GM18951 (cell line): ENCODE measurements at regions of chr10 and their contacts with region 1.

Region 1: DNA sequence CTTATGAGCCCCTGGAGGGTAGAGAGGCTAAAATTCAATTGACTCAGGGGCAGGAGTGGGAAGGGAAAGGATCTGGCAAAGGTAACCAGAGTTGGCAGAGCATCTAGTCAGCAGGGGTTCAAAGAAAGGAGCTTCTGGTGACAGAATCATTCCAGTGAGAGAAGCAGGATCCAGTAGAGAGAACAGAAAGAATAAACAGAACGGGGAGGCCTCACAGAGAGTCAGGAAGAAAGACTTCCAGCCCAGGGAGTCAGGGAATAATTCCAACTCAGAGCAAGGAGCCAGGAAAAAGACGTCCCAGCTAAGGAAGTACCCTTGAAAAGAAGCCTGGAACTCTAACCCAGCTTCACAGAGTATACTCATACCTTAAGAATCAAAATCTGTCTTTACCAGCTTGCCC is 66.6 kb upstream of the CPXM2 start:
- POLR2A ChIP-seq: no peak

Region 2: DNA sequence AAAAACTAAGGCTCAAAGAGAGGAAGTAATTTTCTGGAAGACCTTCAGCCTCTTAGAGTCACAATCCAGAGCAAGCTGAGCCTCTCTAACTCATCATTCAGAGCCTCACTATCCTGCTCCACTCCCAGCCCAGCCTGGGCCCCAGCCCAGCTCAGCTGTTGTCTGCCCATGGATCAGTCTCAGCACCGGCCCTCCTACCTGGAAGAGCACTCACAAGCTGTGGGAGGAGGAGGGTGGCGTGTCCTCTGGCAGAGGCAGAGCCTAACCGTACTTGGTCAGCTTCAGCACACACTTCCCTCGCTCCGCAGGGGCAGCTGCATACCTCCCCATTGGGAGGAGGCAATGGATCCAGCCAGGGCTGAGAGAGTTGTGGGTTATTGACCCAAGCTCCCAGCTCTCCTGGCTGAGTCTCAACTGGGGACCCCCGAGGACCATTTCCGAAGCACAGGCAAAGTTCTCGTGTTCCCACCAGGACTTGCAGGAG is 358.8 kb before region 1 on chr10:
- in situ Hi-C with region 1: loop called (anchors 10 kb)
- POLR2A ChIP-seq: no peak

Region 3: DNA sequence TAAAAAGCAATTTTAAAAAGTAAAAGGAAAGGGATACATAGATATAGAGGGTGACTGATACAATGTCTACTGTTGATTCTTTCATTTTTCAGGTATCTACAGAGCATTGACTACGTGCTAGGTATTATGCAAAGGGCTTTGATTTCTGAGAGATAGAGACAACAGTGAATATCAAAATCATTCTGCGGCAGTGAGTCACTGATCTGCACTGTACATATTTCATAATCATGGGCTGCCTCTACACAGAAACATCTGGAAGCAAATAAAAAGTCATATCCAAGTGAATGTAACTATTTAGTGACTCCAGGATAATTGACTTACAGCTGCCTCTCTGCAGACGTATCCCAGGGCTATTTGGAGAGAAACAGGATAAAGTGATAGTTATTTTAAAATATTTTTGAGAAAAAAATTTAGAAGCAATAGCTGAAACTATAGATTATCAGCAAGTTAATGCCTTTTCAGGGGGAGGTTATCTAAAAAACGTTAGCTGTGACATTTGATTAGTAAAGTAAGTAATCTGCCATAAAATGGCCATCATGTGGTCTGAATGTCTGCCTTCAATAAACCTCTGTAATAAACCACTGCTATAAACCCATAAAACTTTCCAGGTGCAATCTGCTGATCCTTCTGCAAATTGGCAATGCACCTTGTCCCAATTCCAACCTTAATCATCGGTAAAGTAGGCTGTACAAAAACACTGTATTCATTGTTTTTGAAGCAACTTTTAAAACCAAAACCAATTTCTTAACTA is 110.4 kb before region 1 on chr10:
- in situ Hi-C with region 1: no loop called
- POLR2A ChIP-seq: no peak

Region 4: DNA sequence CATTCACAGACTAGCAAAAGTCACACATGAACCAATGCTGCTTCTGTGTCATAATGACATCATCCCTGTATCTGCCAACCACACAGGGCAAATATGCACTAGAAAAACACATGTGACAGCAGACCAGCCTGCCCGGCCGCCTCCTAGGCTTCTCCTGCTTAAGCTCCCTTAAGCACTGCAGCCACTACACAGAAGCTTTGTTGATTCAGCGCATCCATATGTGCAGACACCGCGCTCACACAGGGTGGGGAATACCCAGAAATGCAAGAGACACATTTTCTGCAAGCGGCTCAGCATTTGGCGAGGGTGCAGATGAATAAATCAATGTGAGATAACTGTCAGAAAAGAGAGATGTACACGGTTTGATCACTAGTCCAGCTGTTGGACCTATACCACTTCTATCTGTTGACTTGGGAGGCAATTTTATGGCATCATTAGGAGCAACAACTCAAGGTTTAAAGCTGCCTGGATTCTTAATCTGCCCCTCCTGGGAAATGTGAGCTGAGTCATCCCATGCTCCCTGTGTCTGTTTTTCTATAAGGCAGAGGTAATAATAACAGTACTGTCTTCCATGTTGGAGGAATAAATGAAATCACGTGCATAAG is 100.1 kb before region 1 on chr10:
- in situ Hi-C with region 1: no loop called
- POLR2A ChIP-seq: no peak